Activated CD4-positive, alpha-beta T cell treated with anti-CD3 and anti-CD28 coated beads, Interleukin-2, amount 10 ng/mL, durations not matched to agents 7 days and 5 days (primary cell): ENCODE measurements at regions of chr15 and their contacts with region 1.

Region 1: GRCh38 chr15:31458591-31459399 is 132.2 kb downstream of the KLF13 start:
- DNase-seq: no peak
- H3K4me3 Mint-ChIP-seq: no peak overlapping the region
- H3K27ac Mint-ChIP-seq: peak overlapping the region; percentile 58
- H3K4me1 Mint-ChIP-seq: peaks cover 22% of the 10 kb centered on the region
- H3K27me3 Mint-ChIP-seq: no peaks in the 10 kb centered on the region

Region 2: GRCh38 chr15:31440754-31441311 is 18.0 kb before region 1 on chr15:
- CTCF ChIA-PET with region 1: interaction called, 10 read pairs
- POLR2A ChIA-PET with region 1: no interaction called
- DNase-seq: peak; percentile 50
- H3K4me3 Mint-ChIP-seq: peak overlapping the region; percentile 78
- H3K27ac Mint-ChIP-seq: peak overlapping the region; percentile 91
- H3K4me1 Mint-ChIP-seq: peaks cover 66% of the 10 kb centered on the region
- H3K27me3 Mint-ChIP-seq: no peaks in the 10 kb centered on the region

Region 3: DNA sequence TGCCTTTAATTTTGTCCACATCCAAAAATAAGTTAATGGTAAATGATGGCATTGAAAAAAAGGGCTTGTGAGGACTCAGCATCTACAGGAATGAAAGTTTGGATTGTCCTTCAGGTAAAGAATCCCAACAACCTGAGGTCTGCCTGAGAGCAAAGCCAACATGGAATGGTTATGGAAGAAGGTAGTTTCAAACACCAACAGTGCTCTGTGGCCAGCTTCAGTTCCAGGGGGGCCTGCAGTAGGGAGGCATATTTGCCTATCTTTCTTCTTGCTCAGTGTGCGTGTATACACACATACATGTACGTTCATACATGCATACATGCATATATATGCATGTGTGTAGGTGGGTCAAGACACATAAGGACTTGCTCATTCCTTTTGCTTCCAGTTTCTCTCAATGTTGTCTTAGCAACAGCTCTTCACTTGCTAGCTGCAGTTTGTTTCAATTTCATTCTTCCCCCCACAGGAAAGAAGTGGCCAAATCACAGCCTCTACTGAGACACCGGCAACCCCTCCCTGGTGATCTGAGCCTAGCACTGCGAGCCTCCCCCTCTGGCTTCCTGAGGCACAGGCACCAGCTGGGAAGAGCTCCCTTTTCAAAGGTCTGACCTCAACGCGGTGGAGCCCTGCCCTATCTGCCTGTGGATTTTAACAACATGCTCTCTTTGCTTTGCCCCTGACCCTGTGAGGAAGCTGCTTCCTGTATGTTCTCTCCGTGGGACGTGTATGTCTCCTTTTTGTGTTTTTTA is 14.0 kb after region 1 on chr15:
- CTCF ChIA-PET with region 1: interaction called, 15 read pairs
- POLR2A ChIA-PET with region 1: no interaction called
- DNase-seq: peak; percentile 82
- H3K4me3 Mint-ChIP-seq: peak overlapping the region; percentile 62
- H3K27ac Mint-ChIP-seq: peak overlapping the region; percentile 92
- H3K4me1 Mint-ChIP-seq: peaks cover 43% of the 10 kb centered on the region
- H3K27me3 Mint-ChIP-seq: no peaks in the 10 kb centered on the region

Region 4: GRCh38 chr15:31510057-31510456 is 51.3 kb after region 1 on chr15:
- CTCF ChIA-PET with region 1: no interaction called
- POLR2A ChIA-PET with region 1: no interaction called
- DNase-seq: no peak
- H3K4me3 Mint-ChIP-seq: no peak overlapping the region
- H3K27ac Mint-ChIP-seq: no peak overlapping the region
- H3K4me1 Mint-ChIP-seq: peaks cover 7% of the 10 kb centered on the region
- H3K27me3 Mint-ChIP-seq: peaks cover 24% of the 10 kb centered on the region

Region 5: DNA sequence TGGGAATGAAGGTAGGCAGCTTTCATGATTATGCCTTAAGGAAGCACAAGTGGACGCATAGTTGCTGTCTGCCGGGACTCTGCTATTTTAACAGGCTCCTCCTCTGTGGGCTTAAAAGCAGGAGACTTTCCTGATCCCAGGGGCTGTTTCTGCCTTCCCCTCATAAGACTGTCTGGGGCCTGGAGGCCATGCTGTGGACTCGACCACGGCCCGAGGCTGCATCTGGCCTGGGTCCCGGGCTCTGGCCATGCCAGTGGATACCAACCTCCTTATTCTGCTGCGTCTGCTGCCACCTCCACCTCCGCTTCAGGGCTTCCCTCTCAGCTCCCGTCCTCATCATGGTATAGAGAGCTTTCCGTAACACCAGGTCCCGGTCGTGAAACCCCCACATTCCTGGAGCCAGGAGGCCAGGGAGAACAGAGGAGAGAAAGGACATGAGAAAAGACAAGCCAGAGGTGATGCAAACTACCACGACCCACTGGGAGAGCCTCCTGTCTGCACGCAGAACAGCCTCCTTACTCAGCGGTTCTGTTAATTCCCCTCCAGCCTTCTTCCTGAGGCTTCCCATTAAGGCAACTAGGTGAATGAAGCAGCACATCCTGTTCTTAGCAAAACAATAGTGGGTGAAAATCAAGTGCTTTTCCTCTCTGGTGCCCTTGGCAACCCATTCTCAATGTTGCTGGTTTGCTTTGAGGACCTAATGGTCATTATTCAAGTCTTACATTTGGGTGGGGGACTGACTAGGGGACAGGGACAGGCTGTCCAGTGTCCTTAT is 68.3 kb after region 1 on chr15:
- CTCF ChIA-PET with region 1: no interaction called
- POLR2A ChIA-PET with region 1: no interaction called
- DNase-seq: no peak
- H3K4me3 Mint-ChIP-seq: no peak overlapping the region
- H3K27ac Mint-ChIP-seq: no peak overlapping the region
- H3K4me1 Mint-ChIP-seq: no peaks in the 10 kb centered on the region
- H3K27me3 Mint-ChIP-seq: peaks cover 3% of the 10 kb centered on the region

Region 6: DNA sequence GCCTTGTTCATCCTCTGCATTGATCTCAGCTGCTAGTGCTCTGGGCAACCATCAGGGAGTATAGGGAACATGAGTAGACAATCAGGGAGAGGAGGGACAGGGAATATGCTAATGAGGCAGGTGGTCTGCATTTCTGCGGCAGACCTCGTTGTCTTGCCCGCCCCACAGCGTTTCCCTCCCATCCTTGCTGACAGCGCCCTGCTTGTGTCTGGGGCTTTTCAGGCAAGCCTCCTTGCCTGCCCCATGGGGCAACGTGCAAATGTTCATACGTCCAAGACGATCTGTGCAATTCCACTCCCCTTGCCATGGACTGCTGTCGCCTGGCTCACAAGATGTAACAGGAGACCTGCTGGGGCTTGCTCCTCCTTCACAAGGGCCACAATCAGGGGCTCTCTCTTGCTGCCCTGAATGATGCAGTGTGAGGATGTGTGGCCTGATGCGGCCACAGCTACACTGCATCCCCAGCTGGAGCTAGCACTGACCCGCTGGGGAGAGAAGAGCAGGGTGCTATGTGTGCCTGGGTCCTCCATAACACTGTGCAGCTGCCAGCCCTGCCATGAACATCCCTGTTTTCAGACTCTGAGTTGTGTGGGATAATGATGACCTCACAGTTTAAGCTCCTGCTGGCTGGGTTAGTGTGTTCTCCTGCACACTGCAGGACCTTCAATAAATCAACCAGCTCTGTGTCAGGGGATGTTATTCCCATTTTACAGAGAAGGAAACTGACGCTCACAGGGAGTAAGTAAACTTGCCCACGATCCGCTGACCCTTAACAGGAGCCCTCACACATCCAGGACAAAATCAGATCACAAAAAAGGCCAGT is 79.2 kb after region 1 on chr15:
- CTCF ChIA-PET with region 1: no interaction called
- POLR2A ChIA-PET with region 1: no interaction called
- DNase-seq: no peak
- H3K4me3 Mint-ChIP-seq: no peak overlapping the region
- H3K27ac Mint-ChIP-seq: no peak overlapping the region
- H3K4me1 Mint-ChIP-seq: no peaks in the 10 kb centered on the region
- H3K27me3 Mint-ChIP-seq: peaks cover 51% of the 10 kb centered on the region